Activated T-helper 1 cell treated with anti-CD3 and anti-CD28 coated beads, Interleukin-12 subunit alpha, Interleukin-12 subunit beta, Interleukin-2, Interleukin-4 antibody, amounts not matched to agents 30 ng/mL and 10 ng/mL and 1 ng/mL, durations not matched to agents 14 hours and 24 hours and 36 hours (primary cell): ENCODE measurements at regions of chr6 and their contacts with region 1.

Region 1: GRCh38 chr6:143842902-143843676 is at the start of gene LTV1:
- DNase-seq: peak; percentile 88
- H3K4me3 Mint-ChIP-seq: peak within 1 kb of the TSS; percentile 95
- H3K27ac Mint-ChIP-seq: peak within 1 kb of the TSS; percentile 95
- H3K4me1 Mint-ChIP-seq: peaks cover 29% of the 10 kb centered on the region
- H3K27me3 Mint-ChIP-seq: no peaks in the 10 kb centered on the region
- total RNA-seq, gene LTV1: 63.0 and 67.9 TPM in 2 replicates

Region 2: DNA sequence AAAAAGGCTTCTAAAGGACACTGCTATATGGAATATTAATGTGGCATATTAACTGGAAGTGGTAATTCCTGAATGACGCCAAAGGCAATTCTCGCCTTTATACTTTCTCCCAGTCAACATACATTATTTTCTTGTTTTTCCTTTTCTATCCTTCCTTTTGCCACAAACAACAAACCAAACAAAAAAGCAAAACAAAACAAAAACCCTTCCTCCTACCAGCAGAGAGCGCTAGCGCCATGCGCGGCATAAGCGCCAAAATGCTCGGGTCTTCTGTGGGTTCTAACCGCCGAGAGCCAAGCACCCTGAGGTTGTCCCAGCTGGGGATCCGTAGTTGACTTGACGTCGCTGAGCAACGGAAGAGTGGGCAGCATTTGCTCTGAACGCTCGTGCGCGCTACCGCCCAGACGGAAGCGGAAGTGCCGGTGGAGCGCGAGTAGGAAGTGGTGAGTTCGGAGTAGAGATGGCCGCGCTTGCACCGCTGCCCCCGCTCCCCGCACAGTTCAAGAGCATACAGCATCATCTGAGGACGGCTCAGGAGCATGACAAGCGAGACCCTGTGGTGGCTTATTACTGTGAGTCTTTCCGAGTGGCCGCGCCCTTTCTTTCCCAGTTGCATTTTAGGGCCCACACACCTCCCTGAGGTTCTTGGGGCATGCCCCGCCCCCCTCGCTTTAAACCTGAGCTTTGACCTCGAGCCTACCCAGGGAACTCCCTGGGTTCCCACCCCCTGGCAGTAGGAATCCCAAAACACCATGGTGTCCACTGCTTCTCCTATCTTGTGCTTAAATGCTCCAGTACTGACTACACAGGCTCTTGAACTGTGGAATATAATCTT is 1696.0 kb before region 1 on chr6 and contains the starts of genes NMBR and VTA1:
- intact Hi-C with region 1: loop called (anchors 1 kb)
- DNase-seq: peak; percentile 95
- H3K4me3 Mint-ChIP-seq: peak within 1 kb of the TSS; percentile 90
- H3K27ac Mint-ChIP-seq: peak within 1 kb of the TSS; percentile 79
- H3K4me1 Mint-ChIP-seq: peaks cover 37% of the 10 kb centered on the region
- H3K27me3 Mint-ChIP-seq: no peaks in the 10 kb centered on the region
- total RNA-seq, gene NMBR: not detected in 2 replicates
- total RNA-seq, gene VTA1: 52.4 and 59.6 TPM in 2 replicates

Region 3: DNA sequence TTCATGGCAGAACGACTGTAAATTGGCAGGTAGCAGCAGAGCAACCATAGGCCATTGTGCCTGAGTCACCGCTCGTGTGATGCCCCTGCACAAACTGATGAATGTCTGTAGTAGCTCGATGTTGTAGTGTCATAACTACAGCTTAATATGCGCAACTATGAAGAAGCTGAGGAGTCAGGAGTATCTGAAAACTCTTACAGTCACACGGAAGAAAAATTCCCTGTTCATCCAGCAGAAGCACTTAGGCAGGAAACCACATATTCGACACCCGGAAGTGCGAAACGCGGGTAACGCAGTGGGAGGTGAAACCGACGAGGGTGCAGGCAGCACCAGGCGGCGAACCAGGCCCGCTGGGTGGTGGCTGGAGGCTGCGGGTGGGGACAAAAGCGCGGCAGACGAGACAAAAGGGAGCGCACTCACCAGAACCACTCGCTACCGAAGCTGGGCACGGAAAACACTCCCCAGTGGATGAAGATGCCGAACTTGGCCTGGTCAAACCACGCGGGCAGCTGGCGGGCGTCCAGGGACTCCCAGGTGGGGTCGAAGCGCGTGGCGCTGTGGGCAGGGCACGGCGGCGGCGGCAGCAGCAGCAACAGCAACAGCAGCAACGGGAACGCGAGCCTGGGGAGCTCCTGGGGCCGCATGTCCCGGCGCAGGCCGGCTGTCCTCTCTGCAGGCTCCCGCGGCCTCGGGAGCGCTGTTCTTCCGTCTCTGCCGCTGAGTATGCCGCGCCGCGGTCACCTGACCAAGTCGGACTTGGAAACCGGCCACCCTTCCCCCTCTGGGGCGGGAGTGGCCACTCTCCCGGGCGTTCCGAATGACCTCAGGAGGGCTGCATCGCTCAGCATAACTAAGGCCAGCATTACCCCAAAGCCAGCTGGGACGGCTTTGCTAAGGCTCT is 331.8 kb before region 1 on chr6 and contains the start of gene FUCA2:
- intact Hi-C with region 1: loop called (anchors 1 kb)
- DNase-seq: peak; percentile 64
- H3K4me3 Mint-ChIP-seq: peak within 1 kb of the TSS; percentile 95
- H3K27ac Mint-ChIP-seq: peak within 1 kb of the TSS; percentile 96
- H3K4me1 Mint-ChIP-seq: peaks cover 39% of the 10 kb centered on the region
- H3K27me3 Mint-ChIP-seq: no peaks in the 10 kb centered on the region
- total RNA-seq, gene FUCA2: 15.7 and 16.3 TPM in 2 replicates

Region 4: GRCh38 chr6:143677891-143678791 is 164.9 kb before region 1 on chr6 and contains the start of gene PHACTR2:
- intact Hi-C with region 1: loop called (anchors 2 kb)
- DNase-seq: peak; percentile 4
- H3K4me3 Mint-ChIP-seq: peak within 1 kb of the TSS; percentile 84
- H3K27ac Mint-ChIP-seq: peak within 1 kb of the TSS; percentile 18
- H3K4me1 Mint-ChIP-seq: peaks cover 33% of the 10 kb centered on the region
- H3K27me3 Mint-ChIP-seq: peaks cover 14% of the 10 kb centered on the region
- total RNA-seq, gene PHACTR2: 63.5 and 64.5 TPM in 2 replicates

Region 5: DNA sequence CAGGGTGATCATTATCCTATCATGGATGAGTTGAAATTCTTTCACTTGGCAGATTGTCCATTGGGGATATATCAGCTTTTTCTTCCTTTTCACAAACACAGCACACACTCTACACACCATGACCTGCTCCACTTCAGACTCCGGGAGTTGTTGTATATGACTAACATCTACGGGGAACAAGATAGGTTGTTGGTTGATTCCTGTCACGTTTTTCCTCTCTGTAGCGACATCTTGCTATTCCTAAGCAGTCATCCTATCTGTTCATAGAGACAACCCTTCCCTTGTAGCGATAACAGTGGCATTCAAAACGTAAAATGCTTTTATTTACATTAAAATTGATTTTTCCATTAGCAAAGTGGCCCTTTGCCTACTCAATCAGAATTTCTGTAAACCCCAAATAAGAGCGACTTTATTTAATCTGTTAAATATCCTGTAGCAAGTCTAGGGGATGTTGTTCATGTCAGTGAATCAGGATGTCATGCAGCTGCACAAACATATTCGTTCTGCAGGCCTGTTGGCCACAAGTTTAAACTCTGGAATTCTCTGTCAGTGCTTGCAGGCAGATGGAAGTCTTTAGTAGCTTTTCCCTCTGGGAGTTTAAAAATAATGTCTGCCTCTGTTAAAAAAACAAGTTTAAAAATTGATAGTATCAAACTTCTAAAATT is 142.3 kb before region 1 on chr6:
- intact Hi-C with region 1: no loop called
- DNase-seq: no peak
- H3K4me3 Mint-ChIP-seq: no peak overlapping the region
- H3K27ac Mint-ChIP-seq: no peak overlapping the region
- H3K4me1 Mint-ChIP-seq: peaks cover 18% of the 10 kb centered on the region
- H3K27me3 Mint-ChIP-seq: no peaks in the 10 kb centered on the region

Region 6: GRCh38 chr6:143793280-143793619 is 49.8 kb before region 1 on chr6:
- intact Hi-C with region 1: no loop called
- DNase-seq: no peak
- H3K4me3 Mint-ChIP-seq: no peak overlapping the region
- H3K27ac Mint-ChIP-seq: peak overlapping the region; percentile 34
- H3K4me1 Mint-ChIP-seq: no peaks in the 10 kb centered on the region
- H3K27me3 Mint-ChIP-seq: no peaks in the 10 kb centered on the region

Region 7: GRCh38 chr6:143872201-143872600 is 29.1 kb after region 1 on chr6:
- intact Hi-C with region 1: loop called (anchors 1 kb)
- DNase-seq: no peak
- H3K4me3 Mint-ChIP-seq: no peak overlapping the region
- H3K27ac Mint-ChIP-seq: no peak overlapping the region
- H3K4me1 Mint-ChIP-seq: peaks cover 11% of the 10 kb centered on the region
- H3K27me3 Mint-ChIP-seq: no peaks in the 10 kb centered on the region

Region 8: DNA sequence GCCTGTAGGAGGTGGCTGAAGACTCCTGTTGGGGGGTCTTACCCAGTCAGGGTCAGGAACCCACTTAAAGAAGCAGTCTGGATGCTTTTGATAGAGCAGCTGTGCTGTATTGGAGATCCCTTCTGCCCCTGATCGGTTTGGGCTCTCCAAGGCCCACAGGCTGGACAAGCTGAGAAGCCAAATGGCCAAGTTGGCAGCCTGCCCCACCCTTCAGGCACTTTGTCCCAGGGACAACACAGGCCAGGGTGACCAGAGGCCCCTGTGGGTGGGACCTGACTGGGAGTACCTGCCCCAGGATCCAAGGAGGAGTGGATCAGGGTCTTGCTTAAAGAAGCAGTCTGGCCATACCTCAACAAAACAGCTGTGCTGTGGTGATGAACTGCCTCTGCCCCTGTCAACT is 69.6 kb after region 1 on chr6:
- intact Hi-C with region 1: no loop called
- DNase-seq: no peak
- H3K4me3 Mint-ChIP-seq: no peak overlapping the region
- H3K27ac Mint-ChIP-seq: no peak overlapping the region
- H3K4me1 Mint-ChIP-seq: no peaks in the 10 kb centered on the region
- H3K27me3 Mint-ChIP-seq: peaks cover 9% of the 10 kb centered on the region

Region 9: GRCh38 chr6:143940011-143940597 is 97.0 kb after region 1 on chr6:
- intact Hi-C with region 1: no loop called
- DNase-seq: peak; percentile 26
- H3K4me3 Mint-ChIP-seq: no peak overlapping the region
- H3K27ac Mint-ChIP-seq: no peak overlapping the region
- H3K4me1 Mint-ChIP-seq: peaks cover 9% of the 10 kb centered on the region
- H3K27me3 Mint-ChIP-seq: peaks cover 3% of the 10 kb centered on the region

Region 10: DNA sequence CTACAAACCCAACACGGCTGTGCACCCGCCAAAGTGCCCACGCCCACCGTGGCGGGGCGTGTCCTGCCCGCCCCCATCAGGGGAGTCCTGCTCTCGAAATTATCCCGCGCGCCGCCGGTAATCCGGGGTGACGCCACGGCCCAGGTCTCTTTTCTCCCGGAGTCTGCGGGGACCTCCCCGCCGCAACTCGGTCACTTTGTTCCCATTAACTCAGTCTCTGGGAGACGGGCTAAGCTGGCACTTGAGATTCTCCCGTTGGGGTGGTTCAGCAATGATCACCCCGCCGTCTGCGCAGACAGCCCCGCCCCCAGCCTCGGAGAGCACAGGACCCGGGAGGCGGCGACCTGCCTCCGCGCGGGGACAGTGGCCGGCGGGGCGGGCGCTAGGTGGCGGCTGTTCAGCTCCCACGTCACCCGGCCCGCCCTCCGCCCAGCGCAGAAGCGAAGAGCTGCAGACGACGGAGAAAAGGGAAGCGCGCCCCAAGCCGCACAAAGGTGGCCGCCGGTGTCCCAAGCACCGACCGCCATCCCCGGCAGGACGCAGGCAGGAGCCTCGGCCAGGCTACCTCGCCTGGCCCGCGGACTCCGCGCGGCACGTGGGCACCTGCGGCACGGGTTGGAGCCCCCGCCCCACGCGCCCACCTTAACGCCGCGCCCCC is 220.8 kb after region 1 on chr6:
- intact Hi-C with region 1: loop called (anchors 2 kb)
- DNase-seq: peak; percentile 89
- H3K4me3 Mint-ChIP-seq: peak overlapping the region; percentile 83
- H3K27ac Mint-ChIP-seq: peak overlapping the region; percentile 82
- H3K4me1 Mint-ChIP-seq: peaks cover 44% of the 10 kb centered on the region
- H3K27me3 Mint-ChIP-seq: no peaks in the 10 kb centered on the region

Region 11: DNA sequence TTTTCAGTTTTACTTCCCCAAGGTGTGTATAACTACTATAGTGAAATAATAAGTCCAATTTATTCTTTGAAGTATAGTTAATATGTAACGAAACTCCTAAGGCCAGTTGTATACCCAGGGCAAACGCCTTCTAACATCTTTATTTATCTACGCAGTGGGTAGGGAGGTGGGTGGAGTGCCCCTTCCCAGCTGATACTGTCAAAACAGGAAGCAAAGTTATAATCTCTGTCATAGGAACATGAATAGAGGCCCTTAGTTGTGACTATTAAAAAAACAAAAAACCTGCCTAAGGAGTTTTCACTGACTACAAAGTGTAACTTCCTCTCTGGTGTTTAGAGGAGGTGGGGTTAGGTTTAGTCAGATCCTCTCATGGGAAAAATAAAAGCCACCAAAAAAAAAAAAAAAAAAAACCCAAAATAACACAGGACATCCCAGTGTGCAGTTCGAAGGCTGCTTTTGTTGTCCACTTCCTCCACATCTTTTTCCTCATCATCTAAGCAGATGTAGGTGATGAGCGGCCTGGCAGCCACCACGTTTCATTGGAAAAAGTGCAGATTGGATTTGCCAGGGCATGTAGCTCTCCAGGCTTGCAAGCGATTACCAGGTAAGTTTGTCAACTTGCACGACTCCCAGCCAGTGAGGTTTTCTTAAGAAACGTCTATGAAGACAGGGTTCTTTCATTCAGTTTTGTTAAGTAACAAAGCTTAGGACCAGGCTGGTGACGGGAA is 500.8 kb after region 1 on chr6:
- intact Hi-C with region 1: loop called (anchors 5 kb)
- DNase-seq: peak; percentile 36
- H3K4me3 Mint-ChIP-seq: peak overlapping the region; percentile 96
- H3K27ac Mint-ChIP-seq: peak overlapping the region; percentile 98
- H3K4me1 Mint-ChIP-seq: peaks cover 65% of the 10 kb centered on the region
- H3K27me3 Mint-ChIP-seq: no peaks in the 10 kb centered on the region